ENCODE measurements at regions of chr21 and their contacts with region 1.

Region 1: GRCh38 chr21:42258153-42258884 is 39.4 kb downstream of the ABCG1 start:
- DNase-seq: peak; percentile 90
- CTCF ChIP-seq: peak; percentile 91

Region 2: GRCh38 chr21:42117229-42117966 is 140.9 kb before region 1 on chr21:
- CTCF ChIA-PET with region 1: interaction called, 10 read pairs
- POLR2A ChIA-PET with region 1: no interaction called
- DNase-seq: peak; percentile 84
- CTCF ChIP-seq: peak; percentile 85

Region 3: DNA sequence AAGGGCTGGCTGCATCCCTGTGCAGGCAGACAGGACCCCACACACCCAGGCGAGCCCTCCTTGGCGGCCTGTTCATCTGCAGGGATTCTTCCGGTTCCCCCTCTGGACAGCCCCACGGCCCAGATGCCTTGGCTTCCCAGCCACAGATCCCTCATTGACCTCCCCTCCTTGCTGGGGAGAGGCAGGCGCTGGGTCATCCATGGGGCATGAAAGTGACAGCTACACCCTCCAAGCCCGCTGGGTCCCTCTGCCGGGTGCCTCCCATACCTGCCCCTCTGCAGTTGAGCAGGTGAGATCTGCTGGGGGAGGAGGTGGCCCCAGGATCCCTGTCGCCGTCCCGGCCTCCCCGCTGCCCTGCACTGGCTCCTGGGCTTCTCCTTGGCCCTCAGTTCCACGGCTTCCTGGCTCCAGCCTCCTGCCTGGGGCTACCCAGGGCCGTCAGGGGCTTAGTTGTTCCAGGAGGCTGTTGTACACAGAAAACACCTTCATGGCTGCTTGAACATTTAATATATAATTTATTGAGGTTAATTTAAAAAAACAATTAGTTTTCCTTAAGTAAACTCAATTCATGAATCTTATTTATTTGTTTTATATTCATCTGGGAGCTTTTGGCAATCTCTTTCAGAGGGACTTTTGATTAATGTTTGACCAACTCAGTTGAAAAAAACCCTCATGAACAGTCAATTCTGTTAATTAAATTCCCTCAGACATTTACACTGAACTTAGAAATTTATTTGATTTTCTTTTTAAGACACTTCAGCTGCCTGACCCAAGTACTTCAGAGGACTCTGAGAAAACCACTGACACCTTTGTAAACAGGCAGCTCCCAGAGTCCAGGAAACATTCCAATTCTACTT is 107.0 kb before region 1 on chr21:
- CTCF ChIA-PET with region 1: interaction called, 58 read pairs
- POLR2A ChIA-PET with region 1: no interaction called
- DNase-seq: no peak
- CTCF ChIP-seq: no peak

Region 4: GRCh38 chr21:42164064-42164789 is 94.1 kb before region 1 on chr21:
- CTCF ChIA-PET with region 1: interaction called, 93 read pairs
- POLR2A ChIA-PET with region 1: no interaction called
- DNase-seq: peak; percentile 78
- CTCF ChIP-seq: peak; percentile 87

Region 5: GRCh38 chr21:42225571-42226145 is 32.7 kb before region 1 on chr21:
- CTCF ChIA-PET with region 1: interaction called, 26 read pairs
- POLR2A ChIA-PET with region 1: no interaction called
- DNase-seq: no peak
- CTCF ChIP-seq: no peak

Region 6: DNA sequence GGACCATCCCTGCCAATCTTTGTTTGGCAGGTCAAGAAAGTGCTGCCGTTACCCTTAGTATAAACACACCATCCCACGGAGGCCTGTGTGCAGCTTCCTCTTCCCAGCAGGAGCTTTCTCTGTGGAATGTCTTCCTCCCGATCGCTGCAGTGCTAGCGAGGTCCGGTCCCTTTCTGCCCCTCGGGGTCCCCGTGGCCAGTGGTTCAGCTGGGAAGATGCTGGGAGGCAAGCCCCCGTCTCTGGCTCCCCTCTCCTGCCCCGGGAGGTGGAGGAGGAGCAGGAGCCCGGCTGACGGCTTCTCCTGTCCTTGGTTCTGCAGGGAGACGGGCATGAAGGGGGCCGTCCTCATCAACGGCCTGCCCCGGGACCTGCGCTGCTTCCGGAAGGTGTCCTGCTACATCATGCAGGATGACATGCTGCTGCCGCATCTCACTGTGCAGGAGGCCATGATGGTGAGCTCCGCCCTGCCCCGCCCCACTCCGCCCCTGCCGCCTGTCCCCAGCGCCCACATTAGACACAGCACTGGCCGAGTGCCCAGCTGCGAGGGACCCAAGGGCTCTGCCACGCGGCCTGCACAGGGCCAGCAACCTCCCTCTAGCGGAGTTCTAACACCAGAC is 14.8 kb after region 1 on chr21:
- CTCF ChIA-PET with region 1: interaction called, 30 read pairs
- POLR2A ChIA-PET with region 1: no interaction called
- DNase-seq: no peak
- CTCF ChIP-seq: no peak

Region 7: DNA sequence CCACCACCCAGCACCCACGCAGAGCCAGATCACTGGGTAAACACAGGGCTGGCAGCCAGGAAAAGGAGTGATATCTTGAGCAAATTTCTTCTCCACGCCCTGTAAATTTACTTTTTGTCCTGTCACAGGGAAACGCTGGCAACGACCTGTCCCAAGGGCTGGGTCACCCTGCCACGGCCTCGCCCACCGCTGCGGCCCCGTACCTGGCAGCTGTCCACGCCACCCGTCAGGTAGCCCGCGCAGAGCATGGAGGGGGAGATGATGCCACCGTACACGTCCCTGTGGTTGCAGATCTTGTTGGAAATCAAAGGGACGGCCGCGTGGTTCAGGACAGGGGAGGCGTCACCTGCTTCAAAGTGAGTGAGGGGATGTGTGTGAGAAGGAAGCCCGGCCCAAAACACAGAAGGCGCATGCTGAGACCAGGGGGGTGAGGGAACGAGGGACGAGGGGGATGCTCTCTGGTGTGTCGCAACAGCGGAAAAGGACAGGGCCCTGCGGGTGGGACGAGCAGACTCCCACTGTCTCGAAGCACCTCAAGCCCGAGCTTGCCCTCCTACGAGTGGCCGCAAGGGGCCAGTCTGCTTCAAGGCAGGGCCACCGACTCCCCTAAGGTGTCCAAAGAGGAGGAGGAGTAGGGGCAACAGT is 118.1 kb after region 1 on chr21:
- CTCF ChIA-PET with region 1: no interaction called
- POLR2A ChIA-PET with region 1: no interaction called
- DNase-seq: no peak
- CTCF ChIP-seq: no peak

Measured in GM10248 (cell line).